Panc1 (cell line): ENCODE measurements at regions of chr9 and their contacts with region 1.

Region 1: GRCh38 chr9:109574068-109574882 is 76.2 kb upstream of the PTPN3 start:
- DNase-seq: peak; percentile 24
- ATAC-seq: peak; percentile 82
- H3K4me3 ChIP-seq: no peak overlapping the region
- H3K27ac ChIP-seq: no peak overlapping the region
- H3K4me1 ChIP-seq: no peaks in the 10 kb centered on the region
- H3K27me3 ChIP-seq: no peaks in the 10 kb centered on the region
- CTCF ChIP-seq: peak; percentile 54; the same call in 1 of the 2 replicates

Region 2: GRCh38 chr9:107576962-107577776 is 1997.1 kb before region 1 on chr9:
- CTCF ChIA-PET with region 1: no interaction called
- POLR2A ChIA-PET with region 1: no interaction called
- in situ Hi-C with region 1: no loop called
- intact Hi-C with region 1: loop called (anchors 10 kb)
- DNase-seq: no peak
- ATAC-seq: no peak
- H3K4me3 ChIP-seq: no peak overlapping the region
- H3K27ac ChIP-seq: no peak overlapping the region
- H3K4me1 ChIP-seq: no peaks in the 10 kb centered on the region
- H3K27me3 ChIP-seq: no peaks in the 10 kb centered on the region
- CTCF ChIP-seq: no peak

Region 3: GRCh38 chr9:109652964-109653363 is 78.7 kb after region 1 on chr9:
- CTCF ChIA-PET with region 1: no interaction called
- POLR2A ChIA-PET with region 1: no interaction called
- in situ Hi-C with region 1: no loop called
- intact Hi-C with region 1: loop called (anchors 2 kb)
- DNase-seq: no peak
- ATAC-seq: no peak
- H3K4me3 ChIP-seq: no peak overlapping the region
- H3K27ac ChIP-seq: no peak overlapping the region
- H3K4me1 ChIP-seq: no peaks in the 10 kb centered on the region
- H3K27me3 ChIP-seq: no peaks in the 10 kb centered on the region
- CTCF ChIP-seq: peak; percentile 31

Region 4: DNA sequence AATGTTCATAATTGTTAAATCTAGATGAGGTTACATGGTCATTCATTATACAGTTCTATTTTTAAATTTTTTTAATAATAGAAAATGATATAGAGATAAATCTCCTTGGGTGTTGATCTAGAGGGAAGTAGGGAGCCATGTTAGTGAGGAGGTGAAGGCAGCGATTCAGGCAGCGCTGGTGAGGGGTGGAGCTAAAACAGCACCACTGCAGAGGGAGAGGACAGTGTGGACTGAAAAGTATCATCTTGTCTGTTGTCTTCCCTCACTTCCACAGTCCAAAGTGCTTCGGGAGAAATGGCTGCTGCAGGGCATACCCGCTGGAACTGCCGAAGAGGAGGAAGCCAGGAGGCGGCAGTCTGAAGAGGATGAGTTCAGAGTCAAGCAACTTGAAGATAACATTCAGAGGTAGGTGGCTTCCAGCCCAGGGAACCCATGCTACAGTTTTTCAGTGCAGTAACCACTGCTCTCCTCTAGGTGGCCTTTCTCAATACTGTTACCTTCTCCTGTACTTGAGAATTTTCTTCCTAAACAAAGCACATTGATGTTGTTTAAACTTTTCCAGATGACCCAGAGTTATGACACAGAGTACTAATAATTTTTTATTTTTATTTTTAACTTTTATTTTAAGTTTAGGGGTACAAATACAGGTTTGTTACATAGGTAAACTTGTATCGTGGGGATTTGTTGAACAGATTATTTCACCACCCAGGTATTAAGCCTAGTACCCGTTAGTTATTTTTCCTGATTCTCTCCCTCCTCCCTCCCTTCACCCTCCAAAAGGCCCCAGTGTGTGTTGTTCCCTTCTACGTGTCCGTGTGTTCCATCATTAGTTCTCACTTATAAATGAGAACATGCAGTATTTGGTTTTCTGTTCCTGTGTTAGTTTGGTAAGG is 306.2 kb after region 1 on chr9:
- CTCF ChIA-PET with region 1: no interaction called
- POLR2A ChIA-PET with region 1: no interaction called
- in situ Hi-C with region 1: no loop called
- intact Hi-C with region 1: loop called (anchors 10 kb)
- DNase-seq: no peak
- ATAC-seq: no peak
- H3K4me3 ChIP-seq: no peak overlapping the region
- H3K27ac ChIP-seq: no peak overlapping the region
- H3K4me1 ChIP-seq: no peaks in the 10 kb centered on the region
- H3K27me3 ChIP-seq: no peaks in the 10 kb centered on the region
- CTCF ChIP-seq: peak; percentile 61